ENCODE measurements at regions of chr3 and their contacts with region 1.

Region 1: DNA sequence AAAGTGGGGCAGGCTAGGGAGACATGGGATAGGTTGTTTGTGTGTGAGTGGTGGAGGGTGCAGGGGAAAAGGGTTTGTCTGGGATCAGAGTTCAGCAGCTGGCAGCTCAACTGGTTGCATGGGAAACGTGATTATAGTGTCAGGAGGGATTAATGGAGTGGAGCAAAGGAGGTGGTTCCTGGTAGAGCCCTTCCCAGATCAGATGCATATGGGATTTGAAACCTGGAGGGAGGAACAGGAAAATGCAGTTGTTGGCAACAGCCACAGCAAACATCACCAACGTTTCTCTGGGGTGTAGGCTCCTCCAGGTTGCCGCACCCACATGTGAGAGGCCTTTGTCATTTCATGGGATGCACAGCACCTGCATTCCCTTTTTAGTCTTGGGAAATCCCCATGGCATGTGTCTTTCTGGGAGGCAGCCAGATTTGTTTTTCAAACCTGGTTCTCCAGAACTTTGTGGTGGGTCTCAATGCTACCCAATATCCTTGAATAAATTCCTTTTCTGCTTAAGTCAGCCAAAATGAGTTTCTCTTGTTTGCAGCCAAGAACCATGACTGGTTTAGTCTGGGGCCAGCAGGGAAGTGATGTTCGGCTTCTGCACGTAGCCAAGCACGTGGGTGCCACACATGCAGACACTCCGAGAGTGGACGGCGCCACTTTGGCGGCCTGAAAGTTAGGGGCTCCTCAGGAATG is 61.3 kb downstream of the BDH1 start:
- DNase-seq: no peak
- ATAC-seq: no peak
- H3K4me3 ChIP-seq: no peak overlapping the region
- H3K27ac ChIP-seq: no peak overlapping the region
- H3K4me1 ChIP-seq: no peaks in the 10 kb centered on the region
- H3K27me3 ChIP-seq: no peaks in the 10 kb centered on the region
- CTCF ChIP-seq: no peak

Region 2: GRCh38 chr3:196902296-196902695 is 592.2 kb before region 1 on chr3:
- CTCF ChIA-PET with region 1: no interaction called
- POLR2A ChIA-PET with region 1: no interaction called
- in situ Hi-C with region 1: no loop called
- intact Hi-C with region 1: no loop called
- DNase-seq: no peak
- ATAC-seq: no peak
- H3K4me3 ChIP-seq: no peak overlapping the region
- H3K27ac ChIP-seq: no peak overlapping the region
- H3K4me1 ChIP-seq: no peaks in the 10 kb centered on the region
- H3K27me3 ChIP-seq: no peaks in the 10 kb centered on the region
- CTCF ChIP-seq: no peak

Region 3: GRCh38 chr3:197224034-197224444 is 270.5 kb before region 1 on chr3:
- CTCF ChIA-PET with region 1: no interaction called
- POLR2A ChIA-PET with region 1: interaction called, 10 read pairs
- in situ Hi-C with region 1: no loop called
- intact Hi-C with region 1: no loop called
- DNase-seq: peak; percentile 18
- ATAC-seq: peak; percentile 83
- H3K4me3 ChIP-seq: no peak overlapping the region
- H3K27ac ChIP-seq: no peak overlapping the region
- H3K4me1 ChIP-seq: peaks cover 11% of the 10 kb centered on the region
- H3K27me3 ChIP-seq: no peaks in the 10 kb centered on the region
- CTCF ChIP-seq: peak; percentile 78; the same call in 1 of the 2 replicates

Region 4: DNA sequence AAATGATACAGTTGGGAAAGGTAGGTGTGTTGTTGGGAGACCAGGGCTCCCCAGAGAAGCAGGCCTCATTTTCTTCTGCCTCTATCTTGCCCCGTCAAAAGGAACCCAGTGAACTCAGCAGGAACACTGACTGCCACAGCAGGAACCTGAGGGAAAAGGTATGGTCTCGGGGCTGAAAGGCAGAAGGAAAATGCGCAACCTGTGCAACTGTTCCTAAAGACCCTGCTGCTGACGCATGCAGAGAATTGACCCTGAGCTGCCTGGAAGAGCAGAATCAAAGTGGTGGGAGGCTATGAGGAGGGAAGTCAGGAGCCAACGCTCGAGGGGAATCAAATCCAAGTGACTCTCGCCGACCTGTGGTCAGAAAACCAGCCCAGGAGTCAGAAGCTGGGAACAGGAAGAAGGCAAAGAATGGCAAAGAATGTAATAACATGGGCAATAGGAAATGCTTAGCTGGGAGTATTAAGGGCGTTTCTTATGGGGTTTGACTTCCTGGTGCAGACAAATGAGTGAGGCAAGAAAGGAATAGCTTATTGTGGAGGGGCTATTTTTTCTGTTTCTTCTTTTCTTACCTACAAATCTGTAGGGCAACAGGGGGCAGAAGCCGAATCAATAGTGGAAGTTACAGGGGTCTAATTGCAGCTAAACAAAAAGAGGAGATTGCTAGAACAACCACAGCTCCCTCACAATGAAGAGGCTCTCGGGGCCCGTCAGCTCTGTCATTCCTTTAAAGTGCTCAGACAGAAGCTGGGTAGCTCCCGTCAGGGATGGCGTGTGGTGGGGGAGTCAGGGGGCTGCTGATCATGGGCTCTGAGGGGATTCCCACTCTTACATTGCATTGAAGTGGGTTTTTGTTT is 130.7 kb before region 1 on chr3:
- CTCF ChIA-PET with region 1: no interaction called
- POLR2A ChIA-PET with region 1: interaction called, 11 read pairs
- in situ Hi-C with region 1: no loop called
- intact Hi-C with region 1: no loop called
- DNase-seq: no peak
- ATAC-seq: no peak
- H3K4me3 ChIP-seq: no peak overlapping the region
- H3K27ac ChIP-seq: no peak overlapping the region
- H3K4me1 ChIP-seq: no peaks in the 10 kb centered on the region
- H3K27me3 ChIP-seq: no peaks in the 10 kb centered on the region
- CTCF ChIP-seq: no peak

Measured in Panc1 (cell line).